Thyroid gland (tissue), 4 donors: ENCODE measurements at regions of chr11 and their contacts with region 1.

Region 1: GRCh38 chr11:61187505-61188130 is 15.7 kb upstream of the PGA3 start:
- DNase-seq: peak; percentile 83 to 85
- H3K4me3 ChIP-seq: no peak overlapping the region
- H3K27ac ChIP-seq: no peak overlapping the region
- H3K4me1 ChIP-seq: peaks cover 0 to under 1% of the 10 kb centered on the region in 2 donors
- H3K27me3 ChIP-seq: no peaks in the 10 kb centered on the region
- CTCF ChIP-seq: peak; percentile 80 to 94 (median 90)
- POLR2A ChIP-seq: no peak

Region 2: GRCh38 chr11:60970369-60970774 is 217.2 kb before region 1 on chr11:
- intact Hi-C with region 1: loop called (anchors 2 kb)
- DNase-seq: peak; percentile 49 to 61
- H3K4me3 ChIP-seq: no peak overlapping the region
- H3K27ac ChIP-seq: no peak overlapping the region
- H3K4me1 ChIP-seq: no peaks in the 10 kb centered on the region
- H3K27me3 ChIP-seq: no peaks in the 10 kb centered on the region
- CTCF ChIP-seq: peak; percentile 62 to 88 (median 74)
- POLR2A ChIP-seq: no peak

Region 3: DNA sequence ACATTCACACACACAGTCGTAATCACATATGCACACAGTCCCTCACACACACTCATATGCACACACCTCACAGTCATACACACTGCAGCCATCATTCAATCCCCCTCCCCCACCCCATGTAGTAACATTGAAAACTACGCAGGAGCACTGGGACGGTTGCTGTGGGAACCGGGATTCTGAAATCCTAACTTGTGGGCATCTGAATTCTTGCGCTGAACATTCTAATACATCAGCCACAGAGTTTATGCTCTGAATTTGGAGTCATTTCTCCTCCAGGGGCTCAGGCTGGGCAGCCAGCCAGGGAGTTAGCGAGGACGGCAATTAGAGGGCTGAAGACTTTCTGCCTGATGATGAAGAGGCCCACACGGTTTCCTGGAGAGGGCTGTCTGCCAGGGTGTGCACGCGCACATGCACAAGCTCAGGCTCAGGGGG is 183.4 kb before region 1 on chr11:
- intact Hi-C with region 1: no loop called
- DNase-seq: peak; percentile 27 to 39
- H3K4me3 ChIP-seq: no peak overlapping the region
- H3K27ac ChIP-seq: no peak overlapping the region
- H3K4me1 ChIP-seq: peaks cover 6 to 19% of the 10 kb centered on the region in 2 donors
- H3K27me3 ChIP-seq: no peaks in the 10 kb centered on the region
- CTCF ChIP-seq: no peak
- POLR2A ChIP-seq: no peak

Region 4: GRCh38 chr11:61129639-61130523 is 57.7 kb before region 1 on chr11:
- intact Hi-C with region 1: loop called (anchors 5 kb)
- DNase-seq: peak; percentile 86 to 90
- H3K4me3 ChIP-seq: no peak overlapping the region
- H3K27ac ChIP-seq: no peak overlapping the region
- H3K4me1 ChIP-seq: peaks cover 11 to 27% of the 10 kb centered on the region in 2 donors
- H3K27me3 ChIP-seq: no peaks in the 10 kb centered on the region
- CTCF ChIP-seq: peak; percentile 96 to 100 (median 98)
- POLR2A ChIP-seq: no peak